GM12878 (cell line): ENCODE measurements at regions of chr20 and their contacts with region 1.

Region 1: DNA sequence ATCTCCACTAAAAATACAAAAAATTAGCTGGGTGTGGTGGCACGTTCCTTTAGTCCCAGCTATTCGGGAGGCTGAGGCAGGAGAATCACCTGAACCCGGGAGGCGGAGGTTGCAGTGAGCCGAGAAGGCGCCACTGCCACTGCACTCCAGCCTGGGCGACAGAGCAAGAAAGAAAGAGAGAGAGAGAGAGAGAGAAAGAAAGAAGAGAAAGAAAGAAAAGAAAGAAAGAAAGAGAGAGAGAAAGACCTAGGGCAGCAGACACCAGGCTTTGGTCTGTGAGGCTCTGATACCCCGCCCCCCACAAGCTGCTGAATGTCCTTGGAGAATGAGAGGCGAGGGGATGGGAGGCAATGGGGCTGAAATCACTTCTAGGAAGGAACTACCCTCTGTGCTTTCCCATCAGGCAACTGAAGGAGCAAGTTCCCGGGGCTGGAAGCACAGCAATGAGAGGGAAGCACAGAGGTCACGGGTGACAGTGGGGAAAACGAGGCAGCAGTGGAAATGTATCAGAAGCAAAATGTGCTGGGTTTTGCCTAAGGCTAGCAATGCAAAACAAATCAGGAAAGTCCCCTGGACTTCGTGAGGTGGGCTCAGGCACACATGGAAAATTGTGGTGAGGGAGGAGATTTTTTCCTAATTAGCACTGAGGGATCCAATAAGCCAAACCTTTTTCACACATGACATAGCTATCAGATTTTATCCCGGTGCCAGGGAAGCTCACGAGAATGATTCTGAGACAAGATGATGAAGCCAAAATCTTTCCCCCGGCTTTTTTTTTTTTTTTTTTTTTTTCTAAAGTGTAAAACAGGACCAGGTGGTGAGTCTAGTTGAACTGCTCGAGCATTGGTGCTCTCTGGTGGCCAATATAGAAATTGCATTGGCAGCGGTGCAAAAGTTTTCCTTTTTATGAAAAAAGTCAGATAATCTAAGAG is 16.9 kb upstream of the ARFGEF2 start:
- DNase-seq: no peak
- ATAC-seq: peak; percentile 80
- H3K4me3 ChIP-seq: peak overlapping the region; percentile 7; the same call in 1 of the 2 replicates
- H3K27ac ChIP-seq: peak overlapping the region; percentile 38; the same call in 1 of the 2 replicates
- H3K4me1 ChIP-seq: peaks cover 28% of the 10 kb centered on the region
- H3K27me3 ChIP-seq: no peaks in the 10 kb centered on the region
- CTCF ChIP-seq: peak; percentile 65 to 82 (median 79); a peak in 5 of 6 replicates
- EP300 ChIP-seq: no peak
- POLR2A ChIP-seq: no peak
- RAD21 ChIP-seq: peak; percentile 99

Region 2: DNA sequence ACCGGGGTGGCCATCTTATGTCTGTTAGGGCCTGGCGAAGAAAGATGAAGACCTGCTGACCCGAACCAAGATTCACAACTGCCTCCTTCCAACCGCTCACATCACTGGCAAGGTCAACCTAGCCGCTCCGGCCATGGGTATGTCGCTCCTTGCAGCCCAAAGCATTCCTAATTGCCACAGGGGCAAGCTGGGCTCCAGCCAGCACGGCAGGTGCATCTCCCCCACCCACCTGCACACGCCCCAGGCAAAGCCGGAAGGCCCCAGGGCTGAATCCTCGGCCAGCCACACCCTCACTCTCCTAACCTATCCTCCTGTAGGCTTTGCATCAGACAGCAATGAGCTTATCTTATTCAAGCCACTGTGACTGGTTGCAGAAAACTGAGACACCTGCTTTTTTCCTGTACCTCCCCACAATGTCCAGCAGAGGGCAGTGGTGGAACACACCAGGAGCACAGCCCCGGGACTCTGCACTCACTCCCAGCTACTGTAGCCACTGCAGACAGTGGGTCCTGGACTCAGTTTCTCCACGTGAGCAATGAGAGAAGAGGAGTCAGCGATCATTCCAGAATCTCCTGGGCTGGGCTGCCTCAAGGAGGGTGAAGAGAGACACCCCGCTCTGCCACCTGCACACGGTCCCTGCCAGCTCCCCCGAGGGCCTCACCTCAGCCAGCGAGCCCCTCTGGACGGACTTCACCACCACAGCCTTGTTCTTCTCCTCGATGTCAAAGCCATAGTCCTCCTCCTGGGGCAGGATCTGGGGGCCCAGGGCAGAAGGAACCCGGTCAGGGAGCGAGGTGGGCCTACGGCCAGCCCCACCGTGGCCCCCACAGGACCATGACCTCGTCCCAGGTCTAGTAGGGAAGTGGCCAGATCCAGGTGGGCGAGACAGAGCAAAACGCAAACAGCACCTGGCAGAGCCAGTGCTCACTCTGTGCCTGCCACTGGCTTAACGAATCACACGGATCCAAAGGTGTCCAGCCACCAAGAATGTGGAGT is 246.9 kb before region 1 on chr20:
- CTCF ChIA-PET with region 1: interaction called, 147 read pairs
- POLR2A ChIA-PET with region 1: interaction called, 3 read pairs
- RAD21 ChIA-PET with region 1: interaction called, 139 read pairs
- SMC1A ChIA-PET with region 1: interaction called, 154 read pairs
- in situ Hi-C with region 1: loop called (anchors 5 kb)
- intact Hi-C with region 1: loop called (anchors 1 kb)
- DNase-seq: peak; percentile 21
- ATAC-seq: peak; percentile 94
- H3K4me3 ChIP-seq: no peak overlapping the region
- H3K27ac ChIP-seq: no peak overlapping the region
- H3K4me1 ChIP-seq: no peaks in the 10 kb centered on the region
- H3K27me3 ChIP-seq: no peaks in the 10 kb centered on the region
- CTCF ChIP-seq: peak; percentile 91 to 96 (median 93)
- EP300 ChIP-seq: no peak
- POLR2A ChIP-seq: no peak
- RAD21 ChIP-seq: peak; percentile 95

Region 3: GRCh38 chr20:48722737-48723191 is 181.9 kb before region 1 on chr20:
- CTCF ChIA-PET with region 1: interaction called, 5 read pairs
- POLR2A ChIA-PET with region 1: no interaction called
- RAD21 ChIA-PET with region 1: interaction called, 4 read pairs
- SMC1A ChIA-PET with region 1: interaction called, 6 read pairs
- in situ Hi-C with region 1: no loop called
- intact Hi-C with region 1: loop called (anchors 10 kb)
- DNase-seq: no peak
- ATAC-seq: peak; percentile 14
- H3K4me3 ChIP-seq: no peak overlapping the region
- H3K27ac ChIP-seq: peak overlapping the region; percentile 89
- H3K4me1 ChIP-seq: peaks cover 63% of the 10 kb centered on the region
- H3K27me3 ChIP-seq: no peaks in the 10 kb centered on the region
- CTCF ChIP-seq: 0 out of 6 replicates have a peak, but pooled peaks of 1 of the 3 experiments have one; percentile 3
- EP300 ChIP-seq: no peak
- POLR2A ChIP-seq: no peak
- RAD21 ChIP-seq: no peak

Region 4: GRCh38 chr20:48787861-48788375 is 116.7 kb before region 1 on chr20:
- CTCF ChIA-PET with region 1: interaction called, 13 read pairs
- POLR2A ChIA-PET with region 1: interaction called, 4 read pairs
- RAD21 ChIA-PET with region 1: interaction called, 4 read pairs
- SMC1A ChIA-PET with region 1: interaction called, 8 read pairs
- in situ Hi-C with region 1: no loop called
- intact Hi-C with region 1: no loop called
- DNase-seq: no peak
- ATAC-seq: peak; percentile 36
- H3K4me3 ChIP-seq: peak overlapping the region; percentile 46
- H3K27ac ChIP-seq: peak overlapping the region; percentile 95
- H3K4me1 ChIP-seq: peaks cover 85% of the 10 kb centered on the region
- H3K27me3 ChIP-seq: no peaks in the 10 kb centered on the region
- CTCF ChIP-seq: no peak
- EP300 ChIP-seq: no peak
- POLR2A ChIP-seq: no peak
- RAD21 ChIP-seq: no peak

Region 5: DNA sequence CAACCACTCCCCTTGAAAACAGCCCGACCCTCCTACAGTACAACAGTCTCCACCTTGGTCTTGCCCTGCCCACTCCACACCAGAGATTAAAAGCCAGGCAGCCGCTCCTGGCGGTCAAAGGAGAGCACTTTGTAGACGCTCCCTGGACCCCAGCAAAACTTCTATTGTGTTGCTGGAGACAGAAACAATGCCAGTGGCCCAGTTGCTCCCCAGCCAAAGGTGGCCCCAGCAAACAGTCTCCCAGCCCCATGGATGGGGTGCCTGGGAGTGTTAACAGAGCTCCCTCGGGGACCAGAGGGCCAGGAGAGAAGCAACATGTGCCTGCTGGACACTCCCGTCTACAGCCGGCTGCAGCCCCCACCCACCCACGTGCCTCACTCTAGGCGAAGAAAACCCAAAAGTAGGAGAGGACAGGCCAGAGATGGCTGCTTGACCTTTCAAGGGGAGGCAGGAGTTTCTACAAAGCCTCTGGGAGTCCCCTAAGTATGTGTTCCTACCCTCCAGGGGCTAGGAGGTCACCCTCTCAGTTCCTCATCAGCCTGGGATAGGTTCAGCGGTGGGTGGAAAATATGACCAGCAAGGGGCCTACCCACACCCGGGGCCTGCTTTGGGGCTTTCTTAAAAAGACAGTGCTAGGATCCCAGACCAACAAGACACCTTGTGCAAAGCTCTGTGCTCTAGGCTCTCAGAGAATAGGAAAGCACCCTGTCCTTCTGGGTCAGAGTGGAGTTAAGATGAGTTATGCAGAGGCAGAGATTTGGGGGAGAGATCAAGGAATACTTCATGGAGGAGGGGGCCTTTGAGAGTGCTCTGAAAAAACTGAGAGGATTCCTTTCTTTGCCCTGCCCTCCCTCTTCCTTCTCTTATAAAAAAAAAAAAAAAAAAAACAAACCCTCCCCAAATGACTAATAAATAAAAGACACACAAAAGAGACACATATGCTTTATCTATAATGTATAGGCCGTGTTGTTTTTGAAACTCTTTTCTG is 57.8 kb before region 1 on chr20:
- CTCF ChIA-PET with region 1: interaction called, 3 read pairs
- POLR2A ChIA-PET with region 1: interaction called, 4 read pairs
- RAD21 ChIA-PET with region 1: interaction called, 8 read pairs
- SMC1A ChIA-PET with region 1: interaction called, 14 read pairs
- in situ Hi-C with region 1: no loop called
- intact Hi-C with region 1: loop called (anchors 2 kb)
- DNase-seq: peak; percentile 93
- ATAC-seq: peak; percentile 97
- H3K4me3 ChIP-seq: no peak overlapping the region; the same call in 1 of the 2 replicates
- H3K27ac ChIP-seq: peak overlapping the region; percentile 91
- H3K4me1 ChIP-seq: peaks cover 36% of the 10 kb centered on the region
- H3K27me3 ChIP-seq: no peaks in the 10 kb centered on the region
- CTCF ChIP-seq: no peak
- EP300 ChIP-seq: peak; percentile 92 to 97
- POLR2A ChIP-seq: peak; percentile 49; the same call in 1 of the 2 replicates
- RAD21 ChIP-seq: no peak